Aorta (tissue), 5 donors: ENCODE measurements at regions of chr14 and their contacts with region 1.

Region 1: GRCh38 chr14:36424478-36425102 is 95.4 kb downstream of the NKX2-1 start:
- DNase-seq: no peak
- ATAC-seq: no peak
- H3K4me3 ChIP-seq: no peak overlapping the region
- H3K27ac ChIP-seq: no peak overlapping the region
- H3K4me1 ChIP-seq: peaks cover 0 to 2% of the 10 kb centered on the region in 2 donors
- H3K27me3 ChIP-seq: peaks cover 0 to 2% of the 10 kb centered on the region in 2 donors

Region 2: DNA sequence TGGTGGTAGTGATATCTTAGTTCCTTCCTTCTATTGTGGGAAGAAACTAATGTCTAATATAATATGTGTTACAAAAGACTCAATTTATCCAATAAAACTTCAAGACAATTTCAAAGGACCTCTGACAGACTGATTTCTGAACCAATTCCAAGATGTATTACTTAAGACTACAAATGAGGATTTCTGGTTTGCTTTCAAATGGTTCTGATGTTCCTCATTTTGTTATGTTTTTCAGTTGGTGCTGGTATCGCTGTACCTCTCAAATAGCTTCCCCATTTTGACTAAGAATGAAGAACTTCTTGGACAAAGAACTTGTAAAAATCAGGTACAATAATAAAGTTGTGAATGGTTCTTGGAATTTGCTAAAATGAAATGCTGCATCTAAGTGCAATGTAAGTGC is 84.8 kb before region 1 on chr14:
- intact Hi-C with region 1: loop called in 1 of 2 experiments (anchors 10 kb)
- DNase-seq: no peak
- ATAC-seq: no peak
- H3K4me3 ChIP-seq: no peak overlapping the region
- H3K27ac ChIP-seq: no peak overlapping the region
- H3K4me1 ChIP-seq: no peaks in the 10 kb centered on the region
- H3K27me3 ChIP-seq: no peaks in the 10 kb centered on the region